ENCODE measurements at regions of chr3 and their contacts with region 1.

Region 1: DNA sequence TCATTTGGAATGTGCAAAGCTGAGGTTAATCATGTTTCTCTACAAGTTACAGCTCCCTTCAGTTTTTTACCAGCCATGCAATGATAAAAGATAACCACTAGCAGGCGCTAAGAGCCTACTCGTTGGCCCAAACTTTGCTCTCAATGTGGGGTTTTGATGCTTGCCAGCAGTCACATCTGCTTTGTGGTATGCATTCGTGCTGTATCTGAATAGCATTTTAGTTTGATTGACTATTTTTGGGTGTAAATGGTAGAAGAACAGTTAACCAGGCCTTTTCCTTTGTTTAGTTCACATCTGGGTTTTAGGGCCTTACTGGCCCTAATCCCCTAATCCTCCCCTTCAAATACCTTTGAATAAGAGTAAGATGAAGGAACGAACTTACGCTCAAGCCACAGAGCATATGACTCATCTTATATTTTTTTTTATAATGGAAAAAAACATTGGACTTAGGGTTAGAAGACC is 4.4 kb upstream of the CLDN11 start:
- DNase-seq: peak; percentile 43
- ATAC-seq: peak; percentile 77
- H3K4me3 Mint-ChIP-seq: no peak overlapping the region
- H3K27ac Mint-ChIP-seq: no peak overlapping the region
- H3K4me1 Mint-ChIP-seq: peaks cover 7% of the 10 kb centered on the region
- H3K27me3 Mint-ChIP-seq: peaks cover 22% of the 10 kb centered on the region
- CTCF ChIP-seq: peak; percentile 84

Region 2: DNA sequence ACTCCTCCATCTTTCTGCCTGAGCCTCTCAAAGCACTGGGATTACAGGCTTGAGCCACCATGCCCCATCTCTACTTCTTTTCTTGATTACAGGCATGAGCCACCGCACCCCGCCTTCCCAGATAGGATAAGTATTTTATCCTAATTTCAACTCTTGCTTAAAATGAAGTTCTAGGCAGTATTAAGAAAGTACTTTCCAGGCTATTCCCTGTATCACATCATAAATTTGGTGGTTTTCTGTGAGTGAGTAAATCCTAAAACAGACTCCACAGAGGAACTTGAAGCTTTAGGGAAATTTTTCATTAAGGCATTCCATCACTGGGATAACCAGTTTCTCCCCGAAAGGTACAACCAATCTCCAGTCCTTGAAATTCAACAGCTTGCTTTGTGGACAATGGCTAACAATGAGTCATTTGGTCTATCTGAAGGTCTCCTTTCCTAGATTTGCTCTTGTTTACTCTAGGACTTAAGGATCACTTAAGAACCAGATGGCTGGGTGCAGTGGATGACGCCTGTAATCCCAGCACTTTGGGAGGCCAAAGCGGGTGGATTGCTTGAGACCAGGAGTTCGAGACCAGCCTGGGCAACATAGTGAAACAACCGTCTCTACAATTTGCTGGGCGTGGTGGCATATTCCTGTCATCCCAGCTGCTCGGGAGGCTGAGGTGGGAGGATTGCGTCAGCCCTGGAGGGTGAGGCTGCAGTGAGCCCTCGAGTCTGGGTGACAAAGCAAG is 106.4 kb before region 1 on chr3:
- CTCF ChIA-PET with region 1: interaction called, 7 read pairs
- POLR2A ChIA-PET with region 1: no interaction called
- intact Hi-C with region 1: loop called (anchors 5 kb)
- DNase-seq: no peak
- ATAC-seq: no peak
- H3K4me3 Mint-ChIP-seq: no peak overlapping the region
- H3K27ac Mint-ChIP-seq: no peak overlapping the region
- H3K4me1 Mint-ChIP-seq: no peaks in the 10 kb centered on the region
- H3K27me3 Mint-ChIP-seq: no peaks in the 10 kb centered on the region
- CTCF ChIP-seq: no peak

Region 3: GRCh38 chr3:170429050-170429449 is 14.8 kb after region 1 on chr3:
- CTCF ChIA-PET with region 1: interaction called, 22 read pairs
- POLR2A ChIA-PET with region 1: no interaction called
- intact Hi-C with region 1: no loop called
- DNase-seq: no peak
- ATAC-seq: peak; percentile 42
- H3K4me3 Mint-ChIP-seq: no peak overlapping the region
- H3K27ac Mint-ChIP-seq: no peak overlapping the region
- H3K4me1 Mint-ChIP-seq: peaks cover 19% of the 10 kb centered on the region
- H3K27me3 Mint-ChIP-seq: peaks cover 4% of the 10 kb centered on the region
- CTCF ChIP-seq: no peak

Region 4: GRCh38 chr3:170496026-170496867 is 82.0 kb after region 1 on chr3:
- CTCF ChIA-PET with region 1: interaction called, 17 read pairs
- POLR2A ChIA-PET with region 1: no interaction called
- intact Hi-C with region 1: no loop called
- DNase-seq: no peak
- ATAC-seq: no peak
- H3K4me3 Mint-ChIP-seq: no peak overlapping the region
- H3K27ac Mint-ChIP-seq: no peak overlapping the region
- H3K4me1 Mint-ChIP-seq: no peaks in the 10 kb centered on the region
- H3K27me3 Mint-ChIP-seq: peaks cover 10% of the 10 kb centered on the region
- CTCF ChIP-seq: no peak

Region 5: GRCh38 chr3:170811928-170812591 is 397.8 kb after region 1 on chr3:
- CTCF ChIA-PET with region 1: interaction called, 144 read pairs
- POLR2A ChIA-PET with region 1: no interaction called
- intact Hi-C with region 1: loop called (anchors 1 kb)
- DNase-seq: peak; percentile 82
- ATAC-seq: peak; percentile 96
- H3K4me3 Mint-ChIP-seq: no peak overlapping the region
- H3K27ac Mint-ChIP-seq: no peak overlapping the region
- H3K4me1 Mint-ChIP-seq: no peaks in the 10 kb centered on the region
- H3K27me3 Mint-ChIP-seq: no peaks in the 10 kb centered on the region
- CTCF ChIP-seq: peak; percentile 89

Measured in activated CD8-positive, alpha-beta T cell treated with anti-CD3 and anti-CD28 coated beads for 36 hours (primary cell).